ENCODE measurements at regions of chr11 and their contacts with region 1.

Region 1: DNA sequence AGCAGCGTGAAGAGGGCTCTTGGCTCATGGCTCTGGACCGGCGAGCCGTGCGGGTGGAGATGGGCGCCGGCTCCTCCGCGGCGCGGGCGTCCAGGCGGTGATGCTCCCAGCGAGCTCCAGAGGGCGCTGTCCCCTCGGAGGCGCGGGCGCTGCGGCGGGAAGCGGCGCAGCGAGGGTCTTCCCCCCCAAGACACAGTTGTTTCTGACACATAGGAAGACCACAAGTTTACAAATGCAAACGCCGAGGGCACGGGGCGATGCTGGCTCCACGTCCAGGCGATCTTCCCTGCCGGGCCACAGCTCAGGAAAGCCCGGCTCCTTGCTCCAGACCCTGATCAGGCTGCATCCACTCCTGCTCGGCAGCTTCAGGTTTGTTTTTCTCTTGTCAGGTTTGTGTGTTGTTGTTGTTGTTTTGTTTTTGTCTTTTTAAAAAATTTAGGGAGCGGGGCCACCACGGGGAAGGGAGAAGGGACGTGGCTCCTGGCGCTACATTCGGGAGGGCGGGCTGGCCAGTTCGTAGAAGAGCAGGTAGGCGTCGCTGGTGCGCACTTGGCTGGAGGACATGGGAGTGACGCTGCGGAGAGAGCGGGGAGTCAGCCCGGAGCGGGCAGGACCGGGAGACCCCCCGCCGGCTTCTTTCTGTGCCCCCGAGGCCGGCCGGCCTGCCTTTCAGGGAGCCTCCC is 10.0 kb upstream of the MFRP start:
- DNase-seq: peak; percentile 95
- H3K4me3 ChIP-seq: peak overlapping the region; percentile 42 to 79
- H3K27ac ChIP-seq: peak overlapping the region in 1 of 2 experiments; percentile 26; a peak in 1 of 4 replicates
- H3K4me1 ChIP-seq: peaks cover 8 to 22% of the 10 kb centered on the region in 2 experiments; a peak in 3 of 4 replicates
- H3K27me3 ChIP-seq: no peaks in the 10 kb centered on the region
- CTCF ChIP-seq: peak; percentile 96
- EP300 ChIP-seq: no peak
- RAD21 ChIP-seq: peak; percentile 78

Region 2: DNA sequence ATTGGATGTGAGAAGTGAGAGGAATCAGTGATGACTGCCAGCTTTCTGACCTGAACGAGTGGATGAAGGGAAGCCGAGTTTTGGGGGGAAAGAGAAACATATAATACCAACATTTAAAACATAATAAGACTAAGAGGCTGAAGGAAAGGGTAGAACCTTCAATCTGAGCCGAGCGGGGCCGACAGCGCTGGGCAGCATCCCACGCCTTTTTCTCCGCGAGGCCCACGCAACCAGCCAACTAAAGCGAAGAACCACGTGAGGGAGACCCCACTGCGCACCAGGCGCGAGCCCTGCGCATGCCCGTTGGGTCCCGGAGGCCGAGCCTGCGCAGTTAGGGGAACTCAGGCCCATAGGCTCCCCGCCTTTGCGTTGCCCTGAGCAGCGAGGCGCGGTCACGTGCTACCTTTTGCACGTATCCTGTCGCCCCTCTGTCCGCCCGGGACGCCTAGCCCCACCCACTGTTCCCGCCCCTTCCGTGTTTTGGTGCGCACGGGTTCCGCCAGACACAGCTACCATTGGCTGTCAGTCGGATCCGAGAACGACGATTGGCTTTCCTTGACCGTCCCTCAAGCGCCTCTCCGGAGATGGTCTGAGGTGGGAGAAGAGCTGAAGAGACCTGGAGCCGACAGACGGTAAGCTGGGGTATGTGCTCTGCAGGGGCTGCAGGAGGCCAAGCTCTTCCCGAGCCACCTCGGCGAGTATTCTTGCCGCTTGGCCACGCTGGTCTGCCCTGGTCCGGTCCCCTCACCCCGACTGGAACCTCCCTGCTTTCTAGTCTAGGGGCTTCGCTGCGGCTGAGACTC is 235.3 kb before region 1 on chr11 and contains the start of gene HINFP:
- CTCF ChIA-PET with region 1: no interaction called
- POLR2A ChIA-PET with region 1: no interaction called
- DNase-seq: peak; percentile 98
- H3K4me3 ChIP-seq: peak within 1 kb of the TSS; percentile 88 to 90
- H3K27ac ChIP-seq: peak within 1 kb of the TSS; percentile 55 to 92; a peak in 3 of 4 replicates
- H3K4me1 ChIP-seq: peaks cover 13 to 17% of the 10 kb centered on the region in 2 experiments; a peak in 3 of 4 replicates
- H3K27me3 ChIP-seq: no peaks in the 10 kb centered on the region
- CTCF ChIP-seq: no peak
- EP300 ChIP-seq: no peak
- RAD21 ChIP-seq: no peak
- polyA plus RNA-seq, gene HINFP: 21.8 and 36.1 TPM in 2 replicates

Region 3: DNA sequence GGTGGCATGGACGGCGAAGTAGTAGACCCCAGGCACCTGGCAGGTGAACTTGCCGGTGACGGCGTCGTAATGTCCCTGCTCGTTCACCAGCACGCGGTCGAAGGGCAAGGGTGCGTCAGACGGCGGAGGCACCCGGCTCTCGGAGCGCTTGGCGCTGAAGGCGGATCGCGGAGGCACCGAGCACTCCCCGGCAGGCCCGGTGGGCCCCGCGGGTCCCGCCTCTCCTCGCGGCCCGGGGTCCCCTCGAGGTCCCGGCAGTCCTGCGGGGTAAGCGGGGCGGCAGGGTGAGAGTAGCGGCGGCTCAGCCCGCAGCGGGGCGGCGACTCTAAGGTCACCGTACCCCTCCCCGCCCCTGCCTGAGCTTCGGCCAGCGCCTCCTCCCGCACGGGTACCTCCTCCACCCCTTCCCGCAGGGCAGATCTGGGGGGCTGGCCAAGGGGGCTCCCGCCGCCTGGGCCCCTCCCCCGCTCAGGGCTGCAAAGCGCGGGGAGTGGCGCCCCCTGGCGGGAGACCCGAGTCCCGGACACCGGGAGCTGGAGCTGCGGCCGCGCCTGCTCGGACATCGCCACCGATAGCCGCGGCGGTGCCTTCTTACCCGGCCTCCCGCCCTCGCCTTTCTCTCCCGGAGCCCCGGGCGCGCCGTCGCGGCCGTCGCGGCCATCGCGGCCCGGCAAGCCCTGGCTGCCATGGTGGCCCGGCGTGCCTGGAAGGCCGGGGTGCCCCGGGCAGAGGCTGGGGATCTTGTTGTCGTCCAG is 16.7 kb before region 1 on chr11:
- CTCF ChIA-PET with region 1: interaction called, 90 read pairs
- POLR2A ChIA-PET with region 1: no interaction called
- DNase-seq: peak; percentile 95
- H3K4me3 ChIP-seq: peak overlapping the region; percentile 37 to 49; a peak in 3 of 4 replicates
- H3K27ac ChIP-seq: no peak overlapping the region; a peak in 1 of 4 replicates
- H3K4me1 ChIP-seq: peaks cover 16 to 41% of the 10 kb centered on the region in 2 experiments; a peak in 3 of 4 replicates
- H3K27me3 ChIP-seq: no peaks in the 10 kb centered on the region
- CTCF ChIP-seq: peak; percentile 75
- EP300 ChIP-seq: no peak
- RAD21 ChIP-seq: peak; percentile 44; the same call in 1 of the 2 replicates

Region 4: DNA sequence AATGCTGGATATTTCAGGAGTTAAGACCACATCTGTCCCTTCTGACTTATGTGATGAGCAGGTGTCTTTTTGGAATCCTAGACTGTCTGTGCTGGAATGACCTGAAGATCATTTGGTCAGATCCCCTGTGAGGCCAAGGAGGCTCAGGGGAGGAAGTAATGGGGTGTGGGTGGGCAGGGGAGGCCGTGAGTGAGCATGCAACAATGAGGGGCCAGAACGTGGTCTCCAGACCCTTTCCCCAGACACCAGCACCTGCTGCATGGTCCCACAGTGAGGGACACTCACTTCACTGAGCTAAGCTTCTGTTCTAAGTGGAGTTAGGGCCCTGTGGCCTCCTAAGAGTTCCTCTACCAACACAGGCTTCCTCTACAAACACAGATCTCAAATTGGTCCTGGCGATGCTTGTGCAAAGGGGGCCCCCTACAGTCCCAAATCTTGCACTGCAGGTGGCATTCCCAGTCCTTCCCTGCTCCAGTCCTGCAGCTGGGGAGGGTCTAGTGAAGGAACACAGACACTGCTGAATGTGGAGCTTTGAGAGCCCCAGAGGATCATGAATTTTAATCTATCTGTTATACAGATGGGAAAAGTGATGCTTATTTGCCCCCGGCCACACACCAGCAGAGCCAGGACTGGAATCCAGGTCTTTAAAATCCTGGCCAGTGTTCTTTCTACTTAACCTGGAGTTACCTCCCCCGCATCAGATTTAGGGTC is 17.6 kb after region 1 on chr11:
- CTCF ChIA-PET with region 1: interaction called, 308 read pairs
- POLR2A ChIA-PET with region 1: interaction called, 9 read pairs
- DNase-seq: peak; percentile 84
- H3K4me3 ChIP-seq: peak overlapping the region in 1 of 2 experiments; percentile 27; a peak in 2 of 4 replicates
- H3K27ac ChIP-seq: peak overlapping the region in 1 of 2 experiments; percentile 98; a peak in 2 of 4 replicates
- H3K4me1 ChIP-seq: peaks cover 9 to 94% of the 10 kb centered on the region in 2 experiments
- H3K27me3 ChIP-seq: no peaks in the 10 kb centered on the region
- CTCF ChIP-seq: peak; percentile 88
- EP300 ChIP-seq: peak in 1 of 2 experiments; percentile 26; a peak in 1 of 4 replicates
- RAD21 ChIP-seq: peak; percentile 96

Region 5: DNA sequence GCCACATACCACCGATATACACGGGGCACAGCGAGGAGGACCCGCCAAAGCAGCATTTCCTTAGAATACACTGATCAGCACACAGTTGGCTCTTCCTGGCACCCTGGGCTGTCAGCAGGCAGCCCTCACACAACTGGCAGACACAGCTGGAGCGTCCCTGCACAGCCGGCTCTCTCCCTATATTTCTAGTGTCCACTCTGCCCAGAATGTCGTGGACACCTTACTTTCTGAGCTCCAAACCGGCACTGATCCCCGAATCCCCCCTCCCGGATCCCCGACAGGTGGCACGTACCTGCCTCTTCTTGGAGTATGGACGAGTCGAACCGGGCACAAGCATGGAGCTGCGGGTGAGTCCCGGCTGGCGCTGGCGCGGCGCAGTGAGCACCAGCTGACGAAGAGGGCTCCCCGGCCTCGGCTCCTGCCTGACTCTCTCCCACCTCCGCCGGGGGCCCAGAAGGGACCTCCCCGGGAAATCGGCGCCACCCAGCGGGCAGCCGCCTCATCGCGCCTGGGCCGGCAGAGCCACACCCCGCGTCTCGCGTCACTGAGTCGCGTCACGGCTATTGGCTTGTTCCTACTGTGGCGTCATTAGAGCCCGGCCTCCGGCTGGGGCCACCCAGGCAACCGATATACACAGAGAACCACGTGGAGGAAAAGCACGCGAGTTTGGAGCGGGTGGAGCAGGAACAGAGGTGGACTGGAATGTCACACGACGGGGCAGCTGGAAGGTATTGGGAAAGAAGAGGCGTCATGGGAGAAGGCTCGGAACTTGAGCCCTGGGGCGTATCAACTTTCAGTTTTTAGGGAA is 24.9 kb after region 1 on chr11 and contains the start of gene USP2:
- CTCF ChIA-PET with region 1: interaction called, 308 read pairs
- POLR2A ChIA-PET with region 1: no interaction called
- DNase-seq: peak; percentile 96
- H3K4me3 ChIP-seq: peak within 1 kb of the TSS; percentile 57 to 62
- H3K27ac ChIP-seq: peak within 1 kb of the TSS in 1 of 2 experiments; percentile 31; a peak in 1 of 4 replicates
- H3K4me1 ChIP-seq: peaks cover 4 to 42% of the 10 kb centered on the region in 2 experiments; a peak in 3 of 4 replicates
- H3K27me3 ChIP-seq: no peaks in the 10 kb centered on the region
- CTCF ChIP-seq: peak; percentile 83
- EP300 ChIP-seq: no peak
- RAD21 ChIP-seq: peak; percentile 70
- polyA plus RNA-seq, gene USP2: 0.81 and 0.97 TPM in 2 replicates

Region 6: GRCh38 chr11:119421941-119422808 is 65.7 kb after region 1 on chr11:
- CTCF ChIA-PET with region 1: interaction called, 19 read pairs
- POLR2A ChIA-PET with region 1: no interaction called
- DNase-seq: peak; percentile 79
- H3K4me3 ChIP-seq: peak overlapping the region; percentile 87 to 96
- H3K27ac ChIP-seq: peak overlapping the region; percentile 70 to 89
- H3K4me1 ChIP-seq: peaks cover 22 to 63% of the 10 kb centered on the region in 2 experiments
- H3K27me3 ChIP-seq: no peaks in the 10 kb centered on the region
- CTCF ChIP-seq: no peak
- EP300 ChIP-seq: no peak
- RAD21 ChIP-seq: no peak

Region 7: GRCh38 chr11:119447664-119448242 is 91.3 kb after region 1 on chr11:
- CTCF ChIA-PET with region 1: interaction called, 11 read pairs
- POLR2A ChIA-PET with region 1: no interaction called
- DNase-seq: no peak
- H3K4me3 ChIP-seq: no peak overlapping the region
- H3K27ac ChIP-seq: no peak overlapping the region
- H3K4me1 ChIP-seq: no peaks in the 10 kb centered on the region
- H3K27me3 ChIP-seq: no peaks in the 10 kb centered on the region
- CTCF ChIP-seq: no peak
- EP300 ChIP-seq: no peak
- RAD21 ChIP-seq: no peak

Region 8: GRCh38 chr11:119460582-119460981 is 104.1 kb after region 1 on chr11:
- CTCF ChIA-PET with region 1: interaction called, 10 read pairs
- POLR2A ChIA-PET with region 1: no interaction called
- DNase-seq: no peak
- H3K4me3 ChIP-seq: no peak overlapping the region
- H3K27ac ChIP-seq: peak overlapping the region in 1 of 2 experiments; percentile 79; a peak in 2 of 4 replicates
- H3K4me1 ChIP-seq: peaks cover 10 to 19% of the 10 kb centered on the region in 2 experiments; a peak in 3 of 4 replicates
- H3K27me3 ChIP-seq: no peaks in the 10 kb centered on the region
- CTCF ChIP-seq: no peak
- EP300 ChIP-seq: no peak
- RAD21 ChIP-seq: no peak

Measured in SK-N-SH (cell line).